ENCODE measurements at regions of chr18 and their contacts with region 1.

Region 1: DNA sequence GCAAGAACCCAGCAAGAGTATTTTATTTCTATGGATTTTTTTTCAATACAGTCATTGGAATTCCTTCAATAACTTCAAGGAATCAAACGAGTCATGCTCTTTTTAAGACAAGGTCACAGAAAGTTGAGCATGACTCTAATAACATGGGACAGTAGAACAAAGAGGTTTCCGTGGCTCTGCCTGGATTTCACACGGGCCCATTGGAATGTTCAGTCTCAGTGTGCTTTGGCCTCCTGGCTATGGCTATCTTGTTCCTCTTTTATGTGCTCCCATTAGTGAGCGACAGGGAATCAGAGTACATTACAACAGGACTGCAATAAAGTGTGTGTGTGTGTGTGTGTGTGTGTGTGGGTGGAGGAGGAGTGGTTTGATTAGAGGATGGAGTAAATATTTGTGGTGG is 312.4 kb downstream of the DCC start:
- DNase-seq: no peak
- H3K4me3 ChIP-seq: no peak overlapping the region
- H3K27ac ChIP-seq: no peak overlapping the region
- H3K4me1 ChIP-seq: no peaks in the 10 kb centered on the region
- H3K27me3 ChIP-seq: no peaks in the 10 kb centered on the region
- CTCF ChIP-seq: no peak
- POLR2A ChIP-seq: no peak

Region 2: GRCh38 chr18:51789871-51790270 is 862.5 kb before region 1 on chr18:
- intact Hi-C with region 1: loop called (anchors 5 kb)
- DNase-seq: no peak
- H3K4me3 ChIP-seq: no peak overlapping the region
- H3K27ac ChIP-seq: no peak overlapping the region
- H3K4me1 ChIP-seq: no peaks in the 10 kb centered on the region
- H3K27me3 ChIP-seq: no peaks in the 10 kb centered on the region
- CTCF ChIP-seq: no peak
- POLR2A ChIP-seq: no peak

Measured in breast epithelium (tissue), 4 donors.